ENCODE measurements at regions of chr1 and their contacts with region 1.

Region 1: DNA sequence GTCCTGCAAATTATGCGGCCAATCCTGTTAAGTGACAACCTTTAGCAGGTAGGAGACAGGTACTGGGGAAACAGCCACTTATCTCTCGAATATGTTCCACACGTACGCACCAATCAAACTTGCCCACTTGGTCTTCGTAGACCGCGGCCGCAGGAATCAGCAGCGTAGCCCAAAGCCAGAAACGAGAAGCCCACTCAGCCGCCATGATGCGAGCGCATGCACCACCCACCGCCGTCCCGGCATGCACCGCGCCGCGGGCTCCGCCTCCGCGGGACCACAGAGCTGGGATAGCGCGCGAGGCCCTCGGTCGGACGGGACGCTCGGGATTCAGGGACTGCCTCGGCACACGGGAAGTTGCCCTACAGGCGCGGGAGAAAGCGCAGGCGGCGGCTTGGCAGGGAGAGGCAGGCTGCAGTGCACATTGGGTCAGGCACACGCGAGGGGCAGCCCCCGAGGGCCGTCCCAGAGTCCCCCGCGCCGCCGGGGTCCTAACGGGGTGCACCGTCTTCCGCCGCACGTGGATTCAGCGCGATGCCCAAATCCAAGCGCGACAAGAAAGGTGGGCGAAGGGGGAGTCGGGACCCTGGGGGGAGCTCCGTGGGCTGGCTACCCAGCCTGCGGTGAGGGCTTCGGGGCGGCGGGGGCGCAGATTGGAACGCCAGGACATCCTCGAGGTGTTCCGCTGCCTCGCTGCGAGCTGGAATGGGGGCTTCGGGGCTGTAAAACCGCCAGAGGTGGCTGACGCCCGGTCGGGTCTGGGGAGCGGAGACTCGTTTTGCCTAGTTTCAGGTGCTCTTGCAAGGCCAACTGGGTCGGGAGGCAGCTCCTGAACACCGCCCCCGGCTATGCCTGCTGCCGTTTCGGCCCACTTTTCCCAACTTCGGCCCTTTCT is at the starts of genes EMC1 and MRTO4:
- DNase-seq: peak; percentile 66 to 80
- H3K4me3 ChIP-seq: peak within 1 kb of the TSS; percentile 74 to 95 (median 93)
- H3K27ac ChIP-seq: peak within 1 kb of the TSS; percentile 92 to 99
- H3K4me1 ChIP-seq: peaks cover 4 to 22% of the 10 kb centered on the region in 2 donors
- H3K27me3 ChIP-seq: no peaks in the 10 kb centered on the region
- CTCF ChIP-seq: no peak
- POLR2A ChIP-seq: no peak
- total RNA-seq, gene EMC1: 22.3 to 42.3 (median 32.3) TPM
- total RNA-seq, gene MRTO4: 18.9 to 35.4 (median 27.4) TPM

Region 2: GRCh38 chr1:17819129-17819802 is 1432.3 kb before region 1 on chr1:
- intact Hi-C with region 1: no loop called
- DNase-seq: no peak
- H3K4me3 ChIP-seq: no peak overlapping the region
- H3K27ac ChIP-seq: no peak overlapping the region
- H3K4me1 ChIP-seq: no peaks in the 10 kb centered on the region
- H3K27me3 ChIP-seq: peaks cover 0 to 14% of the 10 kb centered on the region in 2 donors
- CTCF ChIP-seq: no peak
- POLR2A ChIP-seq: no peak

Region 3: DNA sequence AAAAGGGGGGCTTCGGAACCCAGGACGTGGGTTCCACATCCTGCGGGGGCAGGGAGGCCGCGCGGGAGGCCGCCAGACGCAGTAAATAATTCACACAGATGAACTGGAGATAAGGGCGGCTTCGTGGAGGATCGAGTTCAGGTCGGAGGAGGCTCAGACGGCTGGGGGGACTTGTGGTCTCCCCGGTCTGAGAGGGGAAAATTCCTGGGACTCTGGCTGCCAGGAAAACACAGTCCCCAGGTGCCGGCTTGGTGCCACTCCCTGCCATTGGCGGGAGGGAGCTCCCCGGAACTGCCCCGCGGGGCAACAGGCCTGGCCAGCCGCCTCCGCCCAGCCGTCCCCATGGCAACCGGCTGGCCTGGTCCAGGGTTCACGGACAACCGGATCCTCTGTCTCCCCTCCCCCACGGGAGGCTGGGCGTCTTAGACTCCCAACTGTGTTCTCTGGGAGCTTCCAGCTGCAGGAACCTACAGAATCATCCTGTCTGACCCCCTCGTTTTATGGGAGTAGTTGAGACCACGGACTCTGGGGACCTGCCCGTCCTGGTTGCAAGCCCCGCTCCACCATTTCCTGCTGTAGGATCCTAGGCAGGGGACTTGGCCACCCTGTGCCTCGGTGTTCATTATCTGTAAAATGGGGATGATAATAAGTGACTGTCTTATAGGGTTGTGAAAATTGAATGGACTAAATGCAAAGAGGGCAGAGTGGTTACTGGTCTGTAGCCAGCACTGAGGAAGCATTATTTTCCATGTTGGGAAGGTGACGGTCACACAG is 1224.9 kb after region 1 on chr1:
- intact Hi-C with region 1: loop called (anchors 5 kb)
- DNase-seq: peak; percentile 76 to 92
- H3K4me3 ChIP-seq: peak overlapping the region in 2 of 3 donors; percentile 22 to 52
- H3K27ac ChIP-seq: peak overlapping the region; percentile 68 to 82
- H3K4me1 ChIP-seq: peaks cover 9 to 20% of the 10 kb centered on the region in 2 donors
- H3K27me3 ChIP-seq: no peaks in the 10 kb centered on the region
- CTCF ChIP-seq: no peak
- POLR2A ChIP-seq: no peak